ENCODE measurements at regions of chr11 and their contacts with region 1.

Region 1: GRCh38 chr11:126480410-126481302 is 125.2 kb downstream of the ST3GAL4 start:
- DNase-seq: peak; percentile 85
- CTCF ChIP-seq: peak; percentile 92

Region 2: GRCh38 chr11:125923012-125923579 is 557.6 kb before region 1 on chr11:
- CTCF ChIA-PET with region 1: interaction called, 13 read pairs
- POLR2A ChIA-PET with region 1: no interaction called
- DNase-seq: peak; percentile 73
- CTCF ChIP-seq: peak; percentile 84

Region 3: GRCh38 chr11:126310228-126310991 is 170.2 kb before region 1 on chr11:
- CTCF ChIA-PET with region 1: interaction called, 66 read pairs
- POLR2A ChIA-PET with region 1: no interaction called
- DNase-seq: peak; percentile 65
- CTCF ChIP-seq: peak; percentile 82

Region 4: DNA sequence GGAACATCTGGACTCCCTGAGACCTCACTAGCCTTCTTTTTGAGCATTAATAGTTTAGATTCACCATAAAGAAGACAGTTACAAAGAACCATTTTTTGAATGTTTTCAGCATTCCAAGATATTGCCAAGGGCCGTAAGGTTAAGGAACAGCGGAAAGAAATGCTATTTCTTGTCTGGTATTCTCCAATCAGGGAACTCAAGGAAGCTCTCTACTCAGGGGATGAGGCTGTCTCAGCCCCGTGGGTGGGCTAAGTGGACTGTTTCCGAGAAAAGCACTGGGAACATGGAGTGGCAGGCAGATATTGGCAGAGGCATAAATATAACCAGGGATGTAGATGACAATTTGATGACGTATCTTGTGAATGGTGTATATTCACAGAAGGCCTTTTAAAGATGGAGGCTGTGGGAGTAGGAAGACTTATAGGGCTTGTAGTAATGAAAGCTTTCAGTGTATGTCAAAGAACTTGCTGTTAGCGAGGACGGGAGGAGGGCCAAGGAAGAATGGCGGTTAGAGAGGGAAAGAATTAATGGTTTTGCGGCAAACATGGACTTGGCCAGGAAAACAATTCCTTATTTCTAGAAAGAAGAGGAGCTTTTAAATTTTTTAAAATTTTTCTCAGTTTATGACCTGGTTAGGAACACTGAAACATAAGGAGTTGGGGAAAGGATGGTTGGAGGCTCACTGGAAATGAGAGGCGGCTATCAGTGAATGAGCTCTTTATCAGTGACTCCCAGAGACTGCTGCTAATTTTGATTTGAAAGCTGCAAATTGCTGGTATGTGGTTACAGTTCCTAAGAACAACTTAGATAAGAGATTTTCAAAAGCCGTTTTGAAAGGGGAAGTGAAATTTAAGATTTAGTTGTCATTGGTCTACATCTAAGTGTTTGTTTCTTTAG is 60.6 kb before region 1 on chr11:
- CTCF ChIA-PET with region 1: interaction called, 18 read pairs
- POLR2A ChIA-PET with region 1: no interaction called
- DNase-seq: peak; percentile 70
- CTCF ChIP-seq: no peak

Region 5: DNA sequence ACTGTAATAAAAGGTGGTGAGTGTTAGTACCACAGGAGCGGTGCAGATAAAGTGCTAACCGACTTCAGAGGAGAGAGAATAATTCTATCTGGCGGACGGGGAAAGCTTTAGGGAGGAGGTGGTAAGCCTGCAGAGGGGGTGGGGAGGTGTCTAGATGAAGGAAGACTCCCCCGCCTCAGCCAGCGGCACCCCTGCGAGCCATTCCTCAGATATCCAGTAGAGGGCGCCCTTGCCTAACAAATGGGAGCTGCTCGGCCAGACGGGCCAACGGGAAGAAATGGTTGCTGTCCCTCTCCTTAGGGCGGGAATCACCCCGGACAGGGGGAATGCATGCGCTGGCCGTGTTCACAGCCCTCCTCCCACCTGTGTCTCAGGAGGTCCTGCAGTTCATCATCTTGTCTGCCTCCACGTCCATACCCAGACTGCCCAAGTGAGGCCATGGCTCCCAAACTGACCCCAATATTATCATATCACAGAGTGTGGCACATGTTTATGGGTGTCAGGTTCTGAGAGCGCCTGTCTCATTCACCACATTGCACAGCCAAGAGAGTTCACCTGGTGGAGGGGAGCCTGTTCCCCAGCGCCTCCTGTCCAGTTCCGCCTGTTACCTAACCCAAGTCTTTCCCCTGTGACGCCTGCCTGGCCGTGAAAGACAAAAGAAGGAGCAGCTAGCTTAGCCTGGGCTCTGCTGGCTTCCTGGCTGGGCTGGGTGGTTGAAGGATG is 39.7 kb before region 1 on chr11:
- CTCF ChIA-PET with region 1: interaction called, 69 read pairs
- POLR2A ChIA-PET with region 1: interaction called, 4 read pairs
- DNase-seq: peak; percentile 91
- CTCF ChIP-seq: peak; percentile 91

Region 6: GRCh38 chr11:126452241-126453101 is 28.2 kb before region 1 on chr11:
- CTCF ChIA-PET with region 1: interaction called, 16 read pairs
- POLR2A ChIA-PET with region 1: no interaction called
- DNase-seq: no peak
- CTCF ChIP-seq: no peak

Region 7: DNA sequence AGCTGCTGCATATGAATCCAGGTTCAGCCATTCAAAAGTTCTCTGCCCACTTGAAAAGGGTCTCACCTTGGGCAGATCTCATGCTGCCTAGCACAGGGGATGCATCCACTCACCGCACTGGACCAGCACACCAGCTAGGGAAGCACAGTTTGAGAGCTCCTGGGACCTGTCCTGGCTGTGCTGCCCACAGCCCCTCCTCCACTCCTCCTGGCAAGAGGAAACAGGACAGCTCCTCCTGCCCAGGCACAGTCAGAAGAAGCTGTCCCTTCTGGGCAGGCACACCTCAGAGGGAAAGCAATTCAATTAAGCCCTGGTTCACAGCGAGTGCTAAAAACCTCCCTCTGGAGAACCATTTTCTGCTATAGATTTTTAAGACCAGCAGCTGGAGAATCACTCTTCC is 21.5 kb after region 1 on chr11:
- CTCF ChIA-PET with region 1: interaction called, 13 read pairs
- POLR2A ChIA-PET with region 1: no interaction called
- DNase-seq: no peak
- CTCF ChIP-seq: no peak